ENCODE measurements at regions of chr7 and their contacts with region 1.

Region 1: DNA sequence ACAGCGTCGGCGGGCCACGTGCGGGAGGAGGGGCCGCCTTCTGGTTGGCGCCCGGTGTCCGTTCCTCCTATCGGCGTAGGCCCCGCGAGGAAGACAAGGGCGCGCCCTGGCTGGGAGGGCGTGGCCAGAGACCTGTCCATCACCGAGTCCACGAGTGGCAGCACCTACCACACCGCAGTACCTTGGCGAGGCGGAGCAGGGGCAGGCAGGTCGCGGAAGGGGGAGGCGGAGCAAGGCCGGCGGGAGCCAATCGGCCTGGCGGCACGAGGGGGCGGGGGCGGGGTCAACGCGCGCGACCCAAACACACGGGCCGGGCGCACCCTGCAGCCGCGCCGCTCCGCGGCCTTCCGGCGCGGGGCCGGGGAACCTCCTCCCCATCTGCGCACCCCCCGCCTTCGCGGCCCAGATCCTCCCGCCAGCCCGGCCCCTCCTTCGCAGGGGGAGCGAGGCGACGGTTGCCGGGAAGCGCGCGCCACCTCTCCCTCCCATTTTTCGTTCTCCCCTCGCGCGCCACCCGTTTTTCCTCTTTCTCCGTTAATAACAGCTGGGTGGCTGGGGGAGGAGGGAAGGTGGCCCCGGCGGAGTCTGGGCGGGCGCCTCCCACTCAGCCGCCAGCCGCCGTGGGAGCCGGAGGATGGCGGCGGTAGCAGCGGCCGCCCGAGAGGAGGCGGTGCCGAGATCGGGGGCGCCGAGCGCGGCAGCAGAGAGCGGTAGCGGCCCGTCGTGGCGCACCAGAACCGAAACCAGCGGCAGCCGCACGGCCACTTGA is at the start of gene ZNRF2:
- DNase-seq: peak; percentile 99
- H3K4me3 Mint-ChIP-seq: peak within 1 kb of the TSS; percentile 79
- H3K27ac Mint-ChIP-seq: peak within 1 kb of the TSS; percentile 84
- H3K4me1 Mint-ChIP-seq: peaks cover 39% of the 10 kb centered on the region
- H3K27me3 Mint-ChIP-seq: no peaks in the 10 kb centered on the region
- total RNA-seq, gene ZNRF2: 10.4 to 10.5 TPM

Region 2: DNA sequence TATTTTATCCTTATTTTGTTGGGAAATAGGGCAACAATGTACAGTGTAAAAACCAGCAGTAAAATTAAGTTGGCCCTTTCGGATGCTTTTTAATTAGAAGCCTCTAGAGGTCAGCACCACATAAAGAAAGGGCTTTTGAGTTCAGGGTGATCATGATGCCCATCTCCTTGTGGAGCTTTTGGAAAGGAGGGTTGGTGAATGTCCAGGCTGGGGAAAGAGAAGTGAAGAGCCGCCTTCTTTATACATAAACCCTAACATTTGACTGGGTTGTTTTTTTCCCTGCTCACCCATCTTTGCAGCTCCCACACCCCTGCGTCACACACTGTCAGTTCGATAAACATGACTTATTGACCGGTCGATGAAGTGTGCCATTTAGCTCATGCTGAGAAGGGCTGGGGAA is 119.9 kb before region 1 on chr7:
- CTCF ChIA-PET with region 1: interaction called, 3 read pairs
- intact Hi-C with region 1: loop called (anchors 1 kb)
- DNase-seq: no peak
- H3K4me3 Mint-ChIP-seq: no peak overlapping the region
- H3K27ac Mint-ChIP-seq: peak overlapping the region; percentile 14
- H3K4me1 Mint-ChIP-seq: peaks cover 32% of the 10 kb centered on the region
- H3K27me3 Mint-ChIP-seq: no peaks in the 10 kb centered on the region

Region 3: DNA sequence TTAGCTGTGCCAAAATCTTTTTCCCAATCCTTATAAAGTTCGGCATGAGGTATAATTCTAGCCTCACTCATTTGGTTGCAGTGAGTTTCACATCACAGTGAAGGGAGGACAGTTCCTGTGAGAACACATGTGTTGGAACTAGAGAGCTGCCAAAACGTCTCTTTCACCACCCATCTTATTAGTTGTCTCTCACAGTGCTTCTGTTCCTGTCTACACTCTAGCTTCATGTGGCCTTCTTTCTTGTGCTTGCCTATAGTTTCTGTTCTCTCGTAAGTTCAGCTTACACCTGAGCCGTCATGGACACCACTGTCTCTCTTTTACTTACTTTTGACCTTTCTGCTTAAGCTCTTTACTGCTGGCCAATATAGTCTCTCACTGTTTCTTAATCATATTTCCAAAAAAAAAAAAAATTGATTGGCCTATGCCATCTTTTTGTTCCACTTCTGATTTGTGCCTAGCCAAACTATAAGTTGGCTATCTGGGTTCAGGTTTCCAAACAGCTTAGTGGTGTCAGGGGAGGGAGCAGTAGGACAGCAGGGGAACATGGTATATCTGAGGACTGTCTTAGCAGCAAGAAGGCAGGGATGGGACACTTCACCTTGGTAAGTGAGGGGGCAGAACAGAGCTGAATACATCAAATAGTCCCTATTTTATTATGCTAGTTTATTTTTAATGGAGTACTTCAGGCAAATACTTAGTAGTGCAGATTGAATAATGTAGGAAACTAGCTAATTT is 38.0 kb after region 1 on chr7:
- CTCF ChIA-PET with region 1: interaction called, 3 read pairs
- intact Hi-C with region 1: loop called (anchors 1 kb)
- DNase-seq: peak; percentile 40
- H3K4me3 Mint-ChIP-seq: peak overlapping the region; percentile 78
- H3K27ac Mint-ChIP-seq: peak overlapping the region; percentile 92
- H3K4me1 Mint-ChIP-seq: peaks cover 62% of the 10 kb centered on the region
- H3K27me3 Mint-ChIP-seq: no peaks in the 10 kb centered on the region

Region 4: GRCh38 chr7:30478349-30479201 is 194.1 kb after region 1 on chr7 and contains the start of gene NOD1:
- CTCF ChIA-PET with region 1: interaction called, 3 read pairs
- intact Hi-C with region 1: loop called (anchors 1 kb)
- DNase-seq: peak; percentile 73
- H3K4me3 Mint-ChIP-seq: peak within 1 kb of the TSS; percentile 89
- H3K27ac Mint-ChIP-seq: peak within 1 kb of the TSS; percentile 87
- H3K4me1 Mint-ChIP-seq: peaks cover 52% of the 10 kb centered on the region
- H3K27me3 Mint-ChIP-seq: no peaks in the 10 kb centered on the region
- total RNA-seq, gene NOD1: 9.2 to 9.8 TPM

Region 5: DNA sequence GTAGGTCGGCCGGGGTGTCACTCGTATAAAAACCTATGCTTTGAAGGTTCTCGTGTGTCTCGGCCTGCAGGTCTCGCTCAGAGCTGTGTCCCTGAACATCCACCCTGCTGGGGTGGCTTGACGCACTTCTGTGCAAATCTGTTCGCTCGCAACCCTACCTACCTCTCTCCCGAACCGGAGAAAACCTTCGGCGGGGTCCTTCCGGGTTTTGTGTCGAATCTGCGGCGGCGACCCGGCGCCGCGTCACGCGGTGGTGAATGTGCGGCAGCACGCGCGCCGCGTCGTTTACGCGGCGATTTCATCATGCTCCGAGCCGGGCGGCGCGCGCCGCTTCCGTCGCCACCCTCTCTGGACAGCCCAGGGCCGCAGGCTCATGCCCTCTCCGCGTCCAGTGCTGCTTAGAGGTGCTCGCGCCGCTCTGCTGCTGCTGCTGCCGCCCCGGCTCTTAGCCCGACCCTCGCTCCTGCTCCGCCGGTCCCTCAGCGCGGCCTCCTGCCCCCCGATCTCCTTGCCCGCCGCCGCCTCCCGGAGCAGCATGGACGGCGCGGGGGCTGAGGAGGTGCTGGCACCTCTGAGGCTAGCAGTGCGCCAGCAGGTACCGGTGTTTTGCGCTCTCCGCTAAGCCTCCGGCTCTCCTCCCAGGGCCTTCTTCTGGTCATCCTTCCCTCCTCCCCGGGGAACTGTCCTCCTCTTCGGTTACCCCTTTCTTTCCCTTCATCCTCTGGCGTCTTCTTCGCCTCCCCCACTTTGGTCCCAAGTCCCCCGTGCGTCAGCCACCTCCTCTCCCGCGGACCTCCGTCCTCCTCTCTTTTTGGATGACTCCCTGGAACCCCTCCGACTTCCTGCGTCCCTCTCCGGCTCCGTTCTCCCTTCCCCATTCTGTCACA is 310.3 kb after region 1 on chr7 and contains the start of gene GARS1:
- CTCF ChIA-PET with region 1: no interaction called
- intact Hi-C with region 1: loop called (anchors 1 kb)
- DNase-seq: peak; percentile 88
- H3K4me3 Mint-ChIP-seq: peak within 1 kb of the TSS; percentile 96
- H3K27ac Mint-ChIP-seq: peak within 1 kb of the TSS; percentile 97
- H3K4me1 Mint-ChIP-seq: peaks cover 49% of the 10 kb centered on the region
- H3K27me3 Mint-ChIP-seq: no peaks in the 10 kb centered on the region
- total RNA-seq, gene GARS1: 367 to 385 TPM